Caco-2 (cell line): ENCODE measurements at regions of chr19 and their contacts with region 1.

Region 1: GRCh38 chr19:12035220-12036153 is at the start of gene ZNF433:
- DNase-seq: peak; percentile 86 to 93
- H3K4me3 ChIP-seq: peak within 1 kb of the TSS; percentile 51
- H3K4me3 Mint-ChIP-seq: peak within 1 kb of the TSS; percentile 75
- H3K27ac Mint-ChIP-seq: peak within 1 kb of the TSS; percentile 39
- H3K4me1 ChIP-seq: no peaks in the 10 kb centered on the region
- H3K4me1 Mint-ChIP-seq: peaks cover 6% of the 10 kb centered on the region
- H3K27me3 ChIP-seq: no peaks in the 10 kb centered on the region
- H3K27me3 Mint-ChIP-seq: no peaks in the 10 kb centered on the region
- CTCF ChIP-seq: no peak
- total RNA-seq, gene ZNF433: 0.75 and 1.3 TPM in 2 replicates

Region 2: GRCh38 chr19:11881151-11881800 is 154.2 kb before region 1 on chr19:
- CTCF ChIA-PET with region 1: no interaction called
- POLR2A ChIA-PET with region 1: no interaction called
- intact Hi-C with region 1: loop called (anchors 5 kb)
- DNase-seq: peak; percentile 41 to 58
- H3K4me3 ChIP-seq: no peak overlapping the region
- H3K4me3 Mint-ChIP-seq: no peak overlapping the region
- H3K27ac Mint-ChIP-seq: no peak overlapping the region
- H3K4me1 ChIP-seq: no peaks in the 10 kb centered on the region
- H3K4me1 Mint-ChIP-seq: no peaks in the 10 kb centered on the region
- H3K27me3 ChIP-seq: no peaks in the 10 kb centered on the region
- H3K27me3 Mint-ChIP-seq: no peaks in the 10 kb centered on the region
- CTCF ChIP-seq: peak; percentile 38 to 62

Region 3: GRCh38 chr19:12064590-12065538 is 29.4 kb after region 1 on chr19 and contains the start of gene ZNF844:
- CTCF ChIA-PET with region 1: no interaction called
- POLR2A ChIA-PET with region 1: no interaction called
- intact Hi-C with region 1: no loop called
- DNase-seq: peak; percentile 44 to 74
- H3K4me3 ChIP-seq: peak within 1 kb of the TSS; percentile 37
- H3K4me3 Mint-ChIP-seq: peak within 1 kb of the TSS; percentile 43
- H3K27ac Mint-ChIP-seq: no peak within 1 kb of the TSS
- H3K4me1 ChIP-seq: no peaks in the 10 kb centered on the region
- H3K4me1 Mint-ChIP-seq: no peaks in the 10 kb centered on the region
- H3K27me3 ChIP-seq: no peaks in the 10 kb centered on the region
- H3K27me3 Mint-ChIP-seq: no peaks in the 10 kb centered on the region
- CTCF ChIP-seq: no peak
- total RNA-seq, gene ZNF844: 0.72 and 1.0 TPM in 2 replicates